ENCODE measurements at regions of chr16 and their contacts with region 1.

Region 1: GRCh38 chr16:1964506-1965395 is at the start of gene RPS2:
- DNase-seq: peak; percentile 99
- ATAC-seq: peak; percentile 83
- H3K4me3 Mint-ChIP-seq: peak within 1 kb of the TSS; percentile 96
- H3K27ac Mint-ChIP-seq: peak within 1 kb of the TSS; percentile 96
- H3K4me1 Mint-ChIP-seq: peaks cover 47% of the 10 kb centered on the region
- H3K27me3 Mint-ChIP-seq: no peaks in the 10 kb centered on the region
- total RNA-seq, gene RPS2: 2,821 to 2,910 TPM

Region 2: GRCh38 chr16:1876468-1876867 is 88.3 kb before region 1 on chr16:
- CTCF ChIA-PET with region 1: no interaction called
- POLR2A ChIA-PET with region 1: no interaction called
- DNase-seq: no peak
- ATAC-seq: no peak
- H3K4me3 Mint-ChIP-seq: no peak overlapping the region
- H3K27ac Mint-ChIP-seq: no peak overlapping the region
- H3K4me1 Mint-ChIP-seq: no peaks in the 10 kb centered on the region
- H3K27me3 Mint-ChIP-seq: peaks cover 19% of the 10 kb centered on the region

Region 3: DNA sequence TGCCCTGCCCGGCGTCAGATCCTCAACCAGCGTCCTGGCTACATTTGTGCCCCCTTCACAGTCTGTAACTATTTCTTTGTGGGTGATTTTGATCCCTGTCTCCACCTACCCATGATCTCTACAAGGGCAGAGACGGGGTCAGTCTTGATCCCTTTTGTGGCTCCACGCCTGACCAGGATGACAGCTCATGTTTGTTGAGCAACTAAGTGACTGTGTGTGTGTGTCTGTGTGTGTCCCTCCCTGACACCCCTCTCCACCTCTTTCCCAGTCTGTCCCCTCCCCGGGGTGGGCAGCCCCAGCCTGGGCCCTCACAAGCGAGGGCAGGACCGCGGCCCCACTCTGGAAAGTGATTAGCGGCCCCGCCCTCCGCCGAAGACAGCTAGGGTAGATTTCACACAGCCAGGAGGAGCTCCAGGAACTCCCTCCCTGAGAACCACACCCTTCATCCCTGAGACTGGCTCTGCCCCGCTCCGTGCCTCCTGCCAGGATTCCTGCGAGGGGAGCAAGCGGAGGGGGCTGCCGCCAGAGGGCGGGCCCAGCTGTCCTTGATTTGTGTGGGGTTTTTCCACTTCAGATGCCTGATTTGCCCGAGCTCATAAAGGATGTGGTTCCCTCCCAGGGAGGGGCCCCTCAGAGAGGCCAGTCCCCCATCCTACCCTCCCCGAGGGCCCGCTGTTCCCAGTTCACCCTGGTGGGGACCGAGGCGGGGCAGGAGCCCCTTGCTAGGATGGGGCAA is 41.3 kb before region 1 on chr16:
- CTCF ChIA-PET with region 1: no interaction called
- POLR2A ChIA-PET with region 1: no interaction called
- DNase-seq: no peak
- ATAC-seq: no peak
- H3K4me3 Mint-ChIP-seq: no peak overlapping the region
- H3K27ac Mint-ChIP-seq: no peak overlapping the region
- H3K4me1 Mint-ChIP-seq: peaks cover 2% of the 10 kb centered on the region
- H3K27me3 Mint-ChIP-seq: peaks cover 47% of the 10 kb centered on the region

Region 4: DNA sequence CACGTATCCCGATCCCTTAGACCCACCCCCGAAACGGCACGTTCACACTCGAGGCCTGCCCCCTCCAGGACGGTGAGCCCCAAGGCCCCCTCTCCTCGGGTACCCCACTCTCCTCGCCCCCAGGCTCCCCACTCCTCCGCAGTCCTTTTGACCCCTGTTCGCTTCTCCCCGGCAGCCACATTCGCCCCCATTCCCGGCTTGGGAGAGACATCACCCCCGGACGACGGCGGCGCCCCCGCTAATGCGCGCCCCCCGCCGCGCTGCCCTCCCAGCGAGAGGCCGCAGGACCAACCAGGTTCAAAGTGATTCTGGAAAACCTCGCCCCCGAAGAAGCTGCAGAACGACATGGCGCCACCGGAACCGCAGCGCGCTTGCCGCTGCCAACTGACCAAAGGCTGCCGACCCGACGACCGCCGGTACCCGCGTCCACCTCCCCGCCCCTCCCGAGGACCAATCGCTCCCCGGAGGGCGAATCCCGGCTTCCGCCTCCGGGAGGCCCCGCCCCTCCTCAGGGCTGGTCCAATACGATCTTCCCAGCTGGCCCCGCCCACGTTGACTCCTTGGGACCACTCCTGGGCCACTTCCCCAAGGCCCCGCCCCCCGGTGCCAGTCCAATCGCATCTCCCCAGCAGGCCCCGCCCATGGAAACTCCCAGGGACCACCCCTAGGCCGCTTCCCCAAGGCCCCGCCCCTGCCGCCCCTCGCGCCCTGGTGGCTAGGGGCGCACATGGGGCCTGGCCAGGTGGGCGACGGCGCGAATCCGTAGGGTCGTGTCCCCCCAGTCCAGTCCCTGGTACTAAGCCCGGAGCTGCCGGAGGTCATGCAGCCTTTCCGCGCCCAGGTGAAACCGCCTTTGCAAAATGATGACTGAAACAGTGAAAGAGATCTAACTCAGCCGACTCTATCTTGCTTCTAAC is 21.7 kb before region 1 on chr16 and contains the start of gene MSRB1:
- CTCF ChIA-PET with region 1: interaction called, 6 read pairs
- POLR2A ChIA-PET with region 1: interaction called, 10 read pairs
- DNase-seq: peak; percentile 100
- ATAC-seq: peak; percentile 97
- H3K4me3 Mint-ChIP-seq: peak within 1 kb of the TSS; percentile 85
- H3K27ac Mint-ChIP-seq: peak within 1 kb of the TSS; percentile 82
- H3K4me1 Mint-ChIP-seq: peaks cover 29% of the 10 kb centered on the region
- H3K27me3 Mint-ChIP-seq: no peaks in the 10 kb centered on the region
- total RNA-seq, gene MSRB1: 13.2 to 13.9 TPM

Region 5: GRCh38 chr16:1950047-1950446 is 14.7 kb before region 1 on chr16:
- CTCF ChIA-PET with region 1: no interaction called
- POLR2A ChIA-PET with region 1: interaction called, 14 read pairs
- DNase-seq: no peak
- ATAC-seq: no peak
- H3K4me3 Mint-ChIP-seq: no peak overlapping the region
- H3K27ac Mint-ChIP-seq: no peak overlapping the region
- H3K4me1 Mint-ChIP-seq: no peaks in the 10 kb centered on the region
- H3K27me3 Mint-ChIP-seq: no peaks in the 10 kb centered on the region

Region 6: GRCh38 chr16:1978457-1979120 is 13.8 kb after region 1 on chr16:
- CTCF ChIA-PET with region 1: interaction called, 4 read pairs
- POLR2A ChIA-PET with region 1: interaction called, 31 read pairs
- DNase-seq: no peak
- ATAC-seq: no peak
- H3K4me3 Mint-ChIP-seq: no peak overlapping the region
- H3K27ac Mint-ChIP-seq: no peak overlapping the region
- H3K4me1 Mint-ChIP-seq: peaks cover 10% of the 10 kb centered on the region
- H3K27me3 Mint-ChIP-seq: peaks cover 27% of the 10 kb centered on the region

Region 7: GRCh38 chr16:1983544-1984346 is 19.0 kb after region 1 on chr16 and contains the start of gene GFER:
- CTCF ChIA-PET with region 1: interaction called, 4 read pairs
- POLR2A ChIA-PET with region 1: interaction called, 44 read pairs
- DNase-seq: peak; percentile 80
- ATAC-seq: peak; percentile 88
- H3K4me3 Mint-ChIP-seq: peak within 1 kb of the TSS; percentile 80
- H3K27ac Mint-ChIP-seq: peak within 1 kb of the TSS; percentile 32
- H3K4me1 Mint-ChIP-seq: peaks cover 27% of the 10 kb centered on the region
- H3K27me3 Mint-ChIP-seq: peaks cover 31% of the 10 kb centered on the region
- total RNA-seq, gene GFER: 27.2 to 30.5 TPM

Region 8: GRCh38 chr16:1991948-1992703 is 27.4 kb after region 1 on chr16:
- CTCF ChIA-PET with region 1: no interaction called
- POLR2A ChIA-PET with region 1: interaction called, 44 read pairs
- DNase-seq: peak; percentile 97
- ATAC-seq: peak; percentile 78
- H3K4me3 Mint-ChIP-seq: peak overlapping the region; percentile 69
- H3K27ac Mint-ChIP-seq: no peak overlapping the region
- H3K4me1 Mint-ChIP-seq: peaks cover 30% of the 10 kb centered on the region
- H3K27me3 Mint-ChIP-seq: peaks cover 10% of the 10 kb centered on the region

Measured in activated CD8-positive, alpha-beta T cell treated with anti-CD3 and anti-CD28 coated beads, Interleukin-2, amount 10 ng/mL, durations not matched to agents 7 days and 5 days (primary cell).